Colonic mucosa (tissue), 4 donors: ENCODE measurements at regions of chr13 and their contacts with region 1.

Region 1: GRCh38 chr13:48318821-48319511 is 15.4 kb downstream of the RB1 start:
- DNase-seq: peak; percentile 52
- H3K4me3 ChIP-seq: peak overlapping the region; percentile 26
- H3K27ac ChIP-seq: no peak overlapping the region
- H3K4me1 ChIP-seq: no peaks in the 10 kb centered on the region
- H3K27me3 ChIP-seq: no peaks in the 10 kb centered on the region
- CTCF ChIP-seq: no peak

Region 2: GRCh38 chr13:48126944-48127830 is 191.8 kb before region 1 on chr13:
- intact Hi-C with region 1: loop called (anchors 5 kb)
- DNase-seq: peak; percentile 33
- H3K4me3 ChIP-seq: no peak overlapping the region
- H3K27ac ChIP-seq: no peak overlapping the region
- H3K4me1 ChIP-seq: no peaks in the 10 kb centered on the region
- H3K27me3 ChIP-seq: no peaks in the 10 kb centered on the region
- CTCF ChIP-seq: peak; percentile 77

Region 3: GRCh38 chr13:48235341-48236135 is 83.4 kb before region 1 on chr13:
- intact Hi-C with region 1: no loop called
- DNase-seq: no peak
- H3K4me3 ChIP-seq: peak overlapping the region; percentile 94
- H3K27ac ChIP-seq: peak overlapping the region; percentile 100
- H3K4me1 ChIP-seq: no peaks in the 10 kb centered on the region
- H3K27me3 ChIP-seq: no peaks in the 10 kb centered on the region
- CTCF ChIP-seq: no peak

Region 4: DNA sequence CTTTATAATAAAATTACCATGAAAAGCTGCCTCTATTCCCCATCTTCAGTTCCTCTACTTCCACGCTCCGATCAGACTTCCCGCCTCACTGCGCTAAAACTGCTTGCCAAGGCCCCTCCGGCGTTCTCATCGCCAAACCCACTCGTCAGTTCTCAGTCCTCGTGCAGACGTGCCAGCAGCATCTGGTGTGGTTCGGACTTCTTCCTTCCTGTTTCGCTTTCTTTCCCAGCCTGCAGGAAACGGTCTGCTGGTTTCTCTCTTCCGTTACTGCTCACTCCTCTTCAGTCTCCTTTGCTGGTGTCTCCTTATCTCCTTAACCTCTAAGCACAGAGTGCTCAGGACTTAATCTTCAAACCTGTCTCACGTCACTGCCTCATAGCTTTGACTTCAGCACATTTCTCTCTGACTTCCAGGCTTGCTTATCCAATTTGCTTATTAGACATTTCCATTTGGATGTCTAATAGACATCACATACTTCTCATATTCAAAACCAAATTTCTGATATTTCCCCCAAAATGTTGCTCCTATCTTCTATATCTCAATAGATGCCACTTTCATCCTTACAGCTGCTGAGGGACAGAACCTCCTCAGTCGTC is 173.6 kb after region 1 on chr13:
- intact Hi-C with region 1: no loop called
- DNase-seq: peak; percentile 56
- H3K4me3 ChIP-seq: no peak overlapping the region
- H3K27ac ChIP-seq: peak overlapping the region; percentile 78
- H3K4me1 ChIP-seq: no peaks in the 10 kb centered on the region
- H3K27me3 ChIP-seq: no peaks in the 10 kb centered on the region
- CTCF ChIP-seq: no peak